HEK293T (cell line): ENCODE measurements at regions of chr17 and their contacts with region 1.

Region 1: GRCh38 chr17:58631523-58632323 is 60.1 kb downstream of the TEX14 start:
- DNase-seq: peak; percentile 89

Region 2: DNA sequence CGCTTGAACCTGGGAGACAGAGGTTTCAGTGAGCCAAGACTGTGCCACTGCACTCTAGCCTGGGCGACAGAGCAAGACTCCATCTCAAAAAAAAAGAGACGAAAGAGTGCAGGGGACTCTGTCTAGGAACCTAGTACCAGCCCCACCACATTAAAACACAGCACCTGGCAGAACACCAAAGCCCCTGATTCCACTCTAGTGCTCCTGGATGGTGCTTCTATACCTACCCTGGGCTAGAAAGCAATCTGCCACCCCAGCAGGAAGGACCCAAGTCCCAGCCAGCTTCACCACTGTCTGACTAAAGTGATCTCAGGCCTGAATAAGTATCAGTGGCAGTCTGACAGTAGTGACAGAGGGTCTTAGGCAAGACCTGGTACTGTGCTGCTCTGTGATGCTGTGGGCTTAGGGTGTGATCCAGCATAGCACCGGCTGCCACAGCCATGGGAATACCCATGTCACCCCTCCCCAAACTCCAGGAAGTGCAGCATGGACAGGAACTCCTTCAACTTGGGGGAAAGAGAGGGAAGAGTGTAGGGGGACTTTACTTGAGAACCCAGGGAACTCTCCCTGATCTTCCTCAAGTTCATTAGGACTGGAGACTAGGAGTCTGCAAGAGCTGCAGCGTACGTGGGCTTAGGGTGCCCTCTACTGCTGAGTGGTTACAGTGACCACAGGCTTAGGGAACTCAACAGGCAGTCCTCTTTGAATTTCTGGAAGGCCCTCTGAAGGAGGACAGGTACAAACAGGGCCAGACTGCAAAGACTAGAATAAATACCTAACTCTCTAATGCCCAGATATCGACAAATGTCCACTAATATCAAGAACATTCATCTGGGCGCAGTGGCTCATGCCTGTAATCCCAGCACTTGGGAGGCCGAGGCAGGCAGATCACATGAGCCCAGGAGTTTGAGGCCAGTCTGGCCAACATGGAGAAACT is 184.4 kb before region 1 on chr17:
- CTCF ChIA-PET with region 1: no interaction called
- POLR2A ChIA-PET with region 1: no interaction called
- DNase-seq: peak; percentile 78

Region 3: GRCh38 chr17:58517734-58518609 is 113.8 kb before region 1 on chr17:
- CTCF ChIA-PET with region 1: interaction called, 3 read pairs
- POLR2A ChIA-PET with region 1: interaction called, 61 read pairs
- DNase-seq: peak; percentile 95

Region 4: DNA sequence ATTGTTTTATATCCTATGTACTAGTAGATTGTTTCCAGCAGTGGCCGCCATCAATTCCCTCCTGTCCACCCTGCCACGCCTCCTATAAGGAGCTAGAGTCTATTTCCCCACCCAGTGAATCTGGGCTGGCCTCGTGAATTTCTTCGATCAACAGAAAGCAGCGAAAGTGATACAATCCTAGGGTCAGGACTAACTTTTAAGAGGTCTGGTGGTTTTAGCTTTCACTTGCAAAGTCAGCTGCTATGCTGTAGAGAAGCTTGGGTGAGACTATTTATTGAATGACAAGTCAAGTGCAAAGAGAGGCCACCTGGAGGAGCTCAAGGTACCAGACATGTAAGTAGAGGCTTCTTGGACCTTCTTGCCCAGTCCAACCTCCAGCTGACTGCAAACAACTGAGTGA is 36.4 kb before region 1 on chr17:
- CTCF ChIA-PET with region 1: interaction called, 4 read pairs
- POLR2A ChIA-PET with region 1: interaction called, 35 read pairs
- DNase-seq: no peak

Region 5: GRCh38 chr17:58621174-58621573 is 10.5 kb before region 1 on chr17:
- CTCF ChIA-PET with region 1: no interaction called
- POLR2A ChIA-PET with region 1: interaction called, 28 read pairs
- DNase-seq: no peak

Region 6: DNA sequence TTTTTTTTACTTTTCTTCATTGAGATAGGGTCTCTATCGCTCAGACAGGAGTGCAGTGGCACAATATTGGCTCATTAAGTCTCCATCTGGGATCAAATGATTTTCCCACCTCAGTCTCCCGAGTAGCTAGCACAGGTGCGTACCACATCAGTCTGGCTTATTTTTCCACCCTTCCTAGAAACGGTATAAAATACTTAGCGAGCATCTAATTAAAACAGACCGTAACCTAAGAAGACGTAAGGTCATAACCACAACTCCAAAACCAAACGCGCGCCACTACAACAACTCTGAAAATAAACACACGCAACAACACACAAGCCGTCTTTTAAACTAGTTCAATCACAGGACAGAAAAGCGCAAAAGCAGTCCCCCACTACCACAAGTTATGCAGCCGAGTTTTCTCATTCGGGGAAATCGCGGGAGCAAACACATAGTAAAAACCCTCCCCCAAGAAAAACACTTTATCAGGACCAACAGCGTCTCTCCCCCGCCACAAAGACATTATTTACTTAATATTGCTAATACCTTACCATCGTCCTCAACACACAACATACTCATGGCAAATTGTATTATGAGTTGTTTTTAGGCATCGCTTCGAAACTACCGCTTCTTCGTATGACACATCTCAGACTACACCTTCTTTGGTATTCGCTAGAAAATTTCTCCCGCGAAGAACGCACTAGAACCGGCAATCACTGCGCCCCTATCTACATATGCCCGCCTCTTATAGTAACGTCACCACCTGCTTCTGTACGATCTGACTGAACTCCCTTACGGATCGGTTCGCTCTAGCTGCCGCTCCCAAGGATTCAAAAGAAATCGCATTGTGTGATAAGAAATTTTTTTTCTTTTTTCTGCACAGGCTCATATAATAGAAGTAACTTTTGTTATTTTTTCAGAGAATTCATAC is 27.3 kb after region 1 on chr17:
- CTCF ChIA-PET with region 1: interaction called, 4 read pairs
- POLR2A ChIA-PET with region 1: interaction called, 94 read pairs
- DNase-seq: peak; percentile 87

Region 7: DNA sequence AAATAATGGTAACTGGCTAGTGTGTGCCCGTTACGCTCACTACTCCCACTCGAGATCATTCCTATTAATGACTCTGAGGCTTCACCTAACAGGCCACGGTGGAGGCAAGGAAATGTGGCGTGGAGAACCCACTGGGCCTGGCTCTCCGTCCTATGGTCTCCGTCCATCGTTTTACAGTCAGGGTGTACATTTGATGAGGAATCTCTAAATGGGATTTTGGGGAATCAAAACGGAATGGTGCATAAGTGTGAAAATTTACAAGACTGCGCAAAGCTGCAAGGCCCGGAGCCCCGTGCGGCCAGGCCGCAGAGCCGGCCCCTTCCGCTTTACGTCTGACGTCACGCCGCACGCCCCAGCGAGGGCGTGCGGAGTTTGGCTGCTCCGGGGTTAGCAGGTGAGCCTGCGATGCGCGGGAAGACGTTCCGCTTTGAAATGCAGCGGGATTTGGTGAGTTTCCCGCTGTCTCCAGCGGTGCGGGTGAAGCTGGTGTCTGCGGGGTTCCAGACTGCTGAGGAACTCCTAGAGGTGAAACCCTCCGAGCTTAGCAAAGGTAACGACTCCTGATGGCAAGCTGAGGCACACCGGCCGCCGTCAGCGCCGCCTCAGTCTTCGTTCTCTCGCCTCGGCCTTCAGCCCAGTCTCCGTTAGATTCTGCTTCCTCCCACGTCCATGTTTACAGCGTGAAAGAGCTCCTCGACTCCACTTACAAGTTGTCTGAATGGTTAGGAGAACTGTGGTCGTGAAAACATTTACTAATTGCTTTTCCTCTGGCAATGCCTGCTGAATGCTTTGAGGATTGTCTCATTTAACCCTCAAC is 60.7 kb after region 1 on chr17 and contains the start of gene RAD51C:
- CTCF ChIA-PET with region 1: no interaction called
- POLR2A ChIA-PET with region 1: interaction called, 59 read pairs
- DNase-seq: peak; percentile 88

Region 8: GRCh38 chr17:58741121-58741625 is 109.5 kb after region 1 on chr17:
- CTCF ChIA-PET with region 1: no interaction called
- POLR2A ChIA-PET with region 1: no interaction called
- DNase-seq: no peak